ENCODE measurements at regions of chr5 and their contacts with region 1.

Region 1: DNA sequence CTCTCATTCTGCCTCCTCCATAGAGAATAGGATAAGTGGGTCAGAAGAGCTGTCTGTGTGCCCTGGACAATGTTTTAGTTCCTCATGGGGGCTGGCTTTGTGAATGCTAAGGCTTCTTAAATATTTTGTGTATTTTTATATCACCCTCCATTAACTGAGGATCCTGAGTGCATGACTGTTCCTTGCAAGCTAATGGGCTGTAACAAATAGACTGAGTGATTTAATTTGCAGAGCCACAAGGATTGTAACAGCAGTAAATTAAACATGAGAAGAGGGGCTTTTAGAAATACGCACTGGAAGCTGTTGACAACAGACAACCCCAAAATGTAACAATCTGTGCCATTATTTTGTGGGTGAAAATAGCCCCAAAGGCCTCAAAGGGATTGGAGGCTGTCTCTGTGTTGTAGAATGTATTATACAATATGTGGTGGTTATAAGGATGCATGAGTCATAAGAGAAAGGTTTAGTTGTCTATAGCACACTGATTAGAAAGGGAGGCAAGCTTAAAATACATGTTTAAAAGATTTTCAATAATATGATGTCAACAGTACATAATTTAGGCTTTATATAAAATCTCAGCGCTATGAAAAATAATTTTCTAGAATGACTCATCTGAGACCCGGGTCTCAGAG is 152.7 kb upstream of the ACTBL2 start:
- DNase-seq: no peak
- H3K4me3 Mint-ChIP-seq: no peak overlapping the region
- H3K27ac Mint-ChIP-seq: no peak overlapping the region
- H3K4me1 Mint-ChIP-seq: no peaks in the 10 kb centered on the region
- H3K27me3 Mint-ChIP-seq: peaks cover 5% of the 10 kb centered on the region

Region 2: DNA sequence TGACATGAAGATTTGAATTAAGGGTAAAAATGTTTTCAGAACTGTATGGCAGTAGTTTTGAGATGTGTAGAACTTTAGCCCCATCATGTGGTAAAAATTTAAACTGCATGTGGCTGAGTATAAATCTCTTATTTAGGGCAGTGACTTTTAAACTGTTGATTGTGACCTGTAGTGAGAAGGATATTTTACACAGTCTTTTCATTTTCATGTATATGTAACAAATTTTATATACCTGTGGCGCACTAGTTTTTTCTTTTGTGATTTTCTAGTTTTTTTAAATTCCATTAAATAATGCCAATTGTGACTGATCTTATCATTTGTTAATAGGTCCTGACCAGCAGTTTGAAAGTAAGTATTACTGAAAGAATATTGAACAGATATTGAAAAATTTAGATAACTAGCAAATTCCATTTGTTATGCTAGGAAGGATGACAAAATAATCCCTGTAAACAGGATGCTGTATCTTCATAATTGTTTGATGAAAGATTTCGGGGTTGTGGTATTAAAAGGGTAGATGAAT is 414.2 kb before region 1 on chr5:
- intact Hi-C with region 1: no loop called
- DNase-seq: peak; percentile 17
- H3K4me3 Mint-ChIP-seq: no peak overlapping the region
- H3K27ac Mint-ChIP-seq: no peak overlapping the region
- H3K4me1 Mint-ChIP-seq: peaks cover 18% of the 10 kb centered on the region
- H3K27me3 Mint-ChIP-seq: no peaks in the 10 kb centered on the region

Region 3: GRCh38 chr5:57784121-57784520 is 148.9 kb after region 1 on chr5:
- intact Hi-C with region 1: no loop called
- DNase-seq: no peak
- H3K4me3 Mint-ChIP-seq: no peak overlapping the region
- H3K27ac Mint-ChIP-seq: no peak overlapping the region
- H3K4me1 Mint-ChIP-seq: no peaks in the 10 kb centered on the region
- H3K27me3 Mint-ChIP-seq: peaks cover 6% of the 10 kb centered on the region

Region 4: DNA sequence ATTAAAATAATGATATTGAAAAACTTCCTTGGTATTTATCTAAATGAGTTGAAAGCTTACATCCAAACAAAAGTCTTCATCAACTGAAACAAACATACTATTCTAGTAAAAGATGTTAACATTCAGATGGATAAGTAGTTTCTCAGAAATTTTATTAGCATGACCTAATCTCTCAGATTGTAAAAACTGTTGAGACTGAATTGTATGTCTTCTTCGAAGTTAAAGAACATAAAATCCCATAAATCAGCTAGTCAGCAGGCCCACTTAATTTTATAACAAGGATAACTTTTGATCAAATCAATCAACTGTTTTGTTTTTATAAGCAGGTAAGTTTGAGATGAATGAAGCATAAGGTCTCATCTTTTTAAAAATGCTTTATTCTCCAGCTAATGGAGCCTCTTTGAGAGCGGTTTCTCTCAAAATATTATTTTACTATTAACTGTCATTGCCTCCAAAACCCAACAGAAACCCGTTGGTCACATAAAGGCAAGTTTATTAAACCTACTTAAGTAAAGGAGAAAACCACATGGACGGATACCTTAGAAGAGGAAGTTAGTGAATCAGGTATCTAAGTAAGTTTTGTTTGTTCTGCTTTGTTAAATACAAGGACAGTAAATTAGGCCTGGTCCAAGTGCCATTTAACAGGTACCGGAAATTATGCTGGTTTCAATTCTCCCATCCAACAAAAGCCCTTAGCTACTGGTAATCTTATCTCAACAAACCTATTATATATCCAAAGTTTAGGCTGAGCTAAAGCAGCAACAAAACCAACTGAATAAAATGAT is 1801.3 kb after region 1 on chr5:
- intact Hi-C with region 1: loop called (anchors 10 kb)
- DNase-seq: no peak
- H3K4me3 Mint-ChIP-seq: no peak overlapping the region
- H3K27ac Mint-ChIP-seq: no peak overlapping the region
- H3K4me1 Mint-ChIP-seq: no peaks in the 10 kb centered on the region
- H3K27me3 Mint-ChIP-seq: no peaks in the 10 kb centered on the region

Measured in activated T-helper 1 cell treated with anti-CD3 and anti-CD28 coated beads, Interleukin-12 subunit alpha, Interleukin-12 subunit beta, Interleukin-2, Interleukin-4 antibody, amounts not matched to agents 30 ng/mL and 10 ng/mL and 1 ng/mL, durations not matched to agents 14 hours and 24 hours and 36 hours (primary cell).